Dendritic cell treated with granulocyte-macrophage colony-stimulating factor and Interleukin-4, amounts not matched to agents 40 ng/mL and 50 ng/mL, for 4 days (primary cell): ENCODE measurements at regions of chr14 and their contacts with region 1.

Region 1: GRCh38 chr14:69191340-69192111 is at the start of gene EXD2:
- H3K4me3 Mint-ChIP-seq: peak within 1 kb of the TSS; percentile 93
- H3K27ac Mint-ChIP-seq: peak within 1 kb of the TSS; percentile 88
- H3K4me1 Mint-ChIP-seq: peaks cover 16% of the 10 kb centered on the region
- H3K27me3 Mint-ChIP-seq: peaks cover 15% of the 10 kb centered on the region

Region 2: DNA sequence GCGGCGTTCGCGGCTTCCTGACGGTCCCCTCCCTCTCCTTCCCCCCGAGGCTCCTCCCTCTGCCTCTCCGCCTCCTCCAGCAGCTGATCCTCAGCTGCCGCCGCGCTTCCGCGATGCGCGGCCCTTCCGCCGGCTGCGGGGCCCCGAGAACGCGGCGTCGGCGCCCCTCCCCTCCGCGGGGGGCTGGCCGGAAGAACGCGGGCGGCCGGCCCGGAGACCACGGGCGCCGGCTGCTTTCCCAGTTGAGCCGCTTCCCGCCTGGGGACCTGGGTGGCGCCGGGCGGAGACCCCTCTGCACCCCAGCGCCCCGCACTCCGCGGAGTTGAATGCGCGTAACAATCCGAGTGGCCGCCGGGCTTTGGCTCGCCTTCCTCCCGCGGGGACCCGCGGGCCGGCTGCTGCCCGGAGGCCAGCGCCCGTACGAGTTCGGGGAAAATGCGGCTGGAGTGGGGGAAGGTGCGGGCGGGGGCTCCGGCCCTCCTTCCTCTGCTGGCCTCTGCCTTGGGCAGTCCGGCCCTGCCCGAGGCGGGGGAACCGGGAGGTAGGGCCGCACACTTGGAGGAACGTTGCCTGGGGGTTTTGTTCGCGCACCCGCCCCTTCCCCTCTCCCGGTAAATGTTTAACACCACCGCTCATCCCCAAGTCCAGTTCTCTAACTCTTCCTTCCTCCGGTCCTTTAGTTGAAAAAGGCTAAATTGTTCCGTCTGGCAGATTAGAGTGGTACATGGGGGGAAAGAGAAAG is 38.2 kb before region 1 on chr14:
- intact Hi-C with region 1: loop called (anchors 5 kb)
- H3K4me3 Mint-ChIP-seq: peak overlapping the region; percentile 92
- H3K27ac Mint-ChIP-seq: peak overlapping the region; percentile 96
- H3K4me1 Mint-ChIP-seq: peaks cover 35% of the 10 kb centered on the region
- H3K27me3 Mint-ChIP-seq: peaks cover 12% of the 10 kb centered on the region